Activated CD8-positive, alpha-beta T cell treated with anti-CD3 and anti-CD28 coated beads, Interleukin-2, amount 10 ng/mL, durations not matched to agents 7 days and 5 days (primary cell): ENCODE measurements at regions of chr5 and their contacts with region 1.

Region 1: GRCh38 chr5:32232441-32233219 is 58.5 kb upstream of the GOLPH3 start:
- DNase-seq: peak; percentile 84
- ATAC-seq: peak; percentile 91
- H3K4me3 Mint-ChIP-seq: no peak overlapping the region
- H3K27ac Mint-ChIP-seq: peak overlapping the region; percentile 52
- H3K4me1 Mint-ChIP-seq: peaks cover 6% of the 10 kb centered on the region
- H3K27me3 Mint-ChIP-seq: no peaks in the 10 kb centered on the region

Region 2: DNA sequence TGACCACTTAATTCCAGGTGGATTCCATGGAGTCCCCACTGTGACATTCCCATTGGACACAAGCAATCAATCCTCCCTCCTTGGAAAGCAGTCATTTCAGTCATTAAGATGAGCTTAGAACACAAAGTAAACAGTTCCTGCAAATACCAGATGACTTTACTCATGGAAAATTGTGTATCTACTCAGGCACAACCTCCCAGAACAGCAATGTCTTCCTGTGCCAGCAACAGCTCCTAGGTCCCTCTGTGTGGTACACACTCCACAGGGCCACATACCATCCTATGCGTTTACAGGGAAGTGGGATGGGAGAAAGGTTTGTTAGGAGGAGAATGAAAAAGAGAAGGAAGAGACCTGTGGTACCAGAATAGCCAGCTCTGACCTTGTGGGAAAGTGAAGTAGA is 26.4 kb after region 1 on chr5:
- CTCF ChIA-PET with region 1: interaction called, 11 read pairs
- POLR2A ChIA-PET with region 1: no interaction called
- DNase-seq: no peak
- ATAC-seq: no peak
- H3K4me3 Mint-ChIP-seq: no peak overlapping the region
- H3K27ac Mint-ChIP-seq: no peak overlapping the region
- H3K4me1 Mint-ChIP-seq: peaks cover 17% of the 10 kb centered on the region
- H3K27me3 Mint-ChIP-seq: no peaks in the 10 kb centered on the region

Region 3: DNA sequence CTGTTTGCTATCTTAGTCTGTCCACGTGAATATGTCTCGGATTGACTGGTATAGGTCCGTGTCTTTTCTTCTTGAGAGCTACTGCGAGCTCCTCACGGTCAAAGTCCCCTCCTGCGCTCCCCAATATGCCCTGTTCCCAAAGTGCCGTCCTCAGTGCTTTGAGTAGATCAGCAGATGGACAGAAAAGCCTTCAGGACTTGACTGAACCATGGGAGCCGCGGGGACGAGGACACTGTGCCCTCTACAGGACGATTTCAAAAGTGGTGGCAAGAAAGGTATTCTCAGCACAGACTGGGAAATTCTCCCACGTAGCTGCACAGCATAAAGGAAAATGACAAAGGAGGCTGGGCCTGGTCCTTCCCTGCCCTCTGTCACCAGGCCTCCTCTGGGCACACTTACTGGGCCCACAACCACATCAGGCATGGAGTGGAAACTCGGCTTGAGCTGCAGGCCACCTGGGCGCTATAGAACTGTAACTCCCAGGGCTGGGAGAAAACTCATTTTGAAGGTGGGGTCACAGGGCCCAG is 96.7 kb after region 1 on chr5:
- CTCF ChIA-PET with region 1: interaction called, 134 read pairs
- POLR2A ChIA-PET with region 1: interaction called, 3 read pairs
- DNase-seq: peak; percentile 67
- ATAC-seq: peak; percentile 92
- H3K4me3 Mint-ChIP-seq: no peak overlapping the region
- H3K27ac Mint-ChIP-seq: no peak overlapping the region
- H3K4me1 Mint-ChIP-seq: peaks cover 2% of the 10 kb centered on the region
- H3K27me3 Mint-ChIP-seq: no peaks in the 10 kb centered on the region

Region 4: GRCh38 chr5:32406650-32407049 is 174.0 kb after region 1 on chr5:
- CTCF ChIA-PET with region 1: interaction called, 10 read pairs
- POLR2A ChIA-PET with region 1: no interaction called
- DNase-seq: no peak
- ATAC-seq: no peak
- H3K4me3 Mint-ChIP-seq: no peak overlapping the region
- H3K27ac Mint-ChIP-seq: no peak overlapping the region
- H3K4me1 Mint-ChIP-seq: no peaks in the 10 kb centered on the region
- H3K27me3 Mint-ChIP-seq: no peaks in the 10 kb centered on the region

Region 5: GRCh38 chr5:32443145-32443540 is 210.5 kb after region 1 on chr5:
- CTCF ChIA-PET with region 1: no interaction called
- POLR2A ChIA-PET with region 1: no interaction called
- DNase-seq: no peak
- ATAC-seq: no peak
- H3K4me3 Mint-ChIP-seq: peak overlapping the region; percentile 91
- H3K27ac Mint-ChIP-seq: peak overlapping the region; percentile 90
- H3K4me1 Mint-ChIP-seq: peaks cover 31% of the 10 kb centered on the region
- H3K27me3 Mint-ChIP-seq: peaks cover 6% of the 10 kb centered on the region

Region 6: GRCh38 chr5:32585446-32586275 is 353.0 kb after region 1 on chr5 and contains the start of gene SUB1:
- CTCF ChIA-PET with region 1: interaction called, 28 read pairs
- POLR2A ChIA-PET with region 1: no interaction called
- DNase-seq: peak; percentile 95
- ATAC-seq: peak; percentile 92
- H3K4me3 Mint-ChIP-seq: peak within 1 kb of the TSS; percentile 82
- H3K27ac Mint-ChIP-seq: peak within 1 kb of the TSS; percentile 88
- H3K4me1 Mint-ChIP-seq: peaks cover 62% of the 10 kb centered on the region
- H3K27me3 Mint-ChIP-seq: no peaks in the 10 kb centered on the region
- total RNA-seq, gene SUB1: 352 to 377 TPM

Region 7: GRCh38 chr5:32613050-32613672 is 380.5 kb after region 1 on chr5:
- CTCF ChIA-PET with region 1: interaction called, 15 read pairs
- POLR2A ChIA-PET with region 1: no interaction called
- DNase-seq: peak; percentile 87
- ATAC-seq: peak; percentile 70
- H3K4me3 Mint-ChIP-seq: no peak overlapping the region
- H3K27ac Mint-ChIP-seq: no peak overlapping the region
- H3K4me1 Mint-ChIP-seq: peaks cover 3% of the 10 kb centered on the region
- H3K27me3 Mint-ChIP-seq: no peaks in the 10 kb centered on the region